ENCODE measurements at regions of chr4 and their contacts with region 1.

Region 1: GRCh38 chr4:108036213-108036612 is 46.5 kb downstream of the HADH start:
- DNase-seq: no peak
- ATAC-seq: peak; percentile 85
- H3K4me3 ChIP-seq: peak overlapping the region; percentile 17; the same call in 1 of the 2 replicates
- H3K27ac ChIP-seq: peak overlapping the region; percentile 70
- H3K4me1 ChIP-seq: peaks cover 12% of the 10 kb centered on the region
- H3K27me3 ChIP-seq: no peaks in the 10 kb centered on the region
- CTCF ChIP-seq: no peak
- EP300 ChIP-seq: no peak
- POLR2A ChIP-seq: peak; percentile 74
- RAD21 ChIP-seq: no peak

Region 2: DNA sequence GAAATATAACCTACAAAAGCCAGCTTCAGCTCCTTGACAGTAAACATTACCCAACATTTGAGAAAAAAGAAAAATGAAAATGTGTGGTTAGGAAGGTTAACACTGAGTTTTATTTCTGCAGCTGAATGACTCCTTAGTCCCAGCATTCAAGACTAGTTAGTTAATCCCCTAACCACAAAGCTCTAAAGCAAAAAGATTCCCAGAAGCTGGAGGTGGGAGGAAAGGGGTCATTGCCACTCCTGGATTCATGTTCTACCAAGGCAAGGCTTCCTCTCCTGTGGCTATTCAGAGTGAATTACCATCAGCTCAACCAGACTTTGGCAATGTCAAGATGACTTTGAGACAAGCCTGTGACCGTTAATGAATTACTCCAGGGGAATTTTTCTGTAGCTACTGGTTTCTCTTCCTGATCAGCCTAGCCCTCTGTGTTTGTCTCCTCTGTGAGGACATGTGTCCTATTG is 17.1 kb after region 1 on chr4:
- CTCF ChIA-PET with region 1: interaction called, 8 read pairs
- POLR2A ChIA-PET with region 1: interaction called, 5 read pairs
- RAD21 ChIA-PET with region 1: interaction called, 14 read pairs
- SMC1A ChIA-PET with region 1: interaction called, 21 read pairs
- in situ Hi-C with region 1: no loop called
- intact Hi-C with region 1: no loop called
- DNase-seq: no peak
- ATAC-seq: peak; percentile 93
- H3K4me3 ChIP-seq: no peak overlapping the region
- H3K27ac ChIP-seq: no peak overlapping the region
- H3K4me1 ChIP-seq: no peaks in the 10 kb centered on the region
- H3K27me3 ChIP-seq: no peaks in the 10 kb centered on the region
- CTCF ChIP-seq: no peak
- EP300 ChIP-seq: no peak
- POLR2A ChIP-seq: no peak
- RAD21 ChIP-seq: no peak

Region 3: DNA sequence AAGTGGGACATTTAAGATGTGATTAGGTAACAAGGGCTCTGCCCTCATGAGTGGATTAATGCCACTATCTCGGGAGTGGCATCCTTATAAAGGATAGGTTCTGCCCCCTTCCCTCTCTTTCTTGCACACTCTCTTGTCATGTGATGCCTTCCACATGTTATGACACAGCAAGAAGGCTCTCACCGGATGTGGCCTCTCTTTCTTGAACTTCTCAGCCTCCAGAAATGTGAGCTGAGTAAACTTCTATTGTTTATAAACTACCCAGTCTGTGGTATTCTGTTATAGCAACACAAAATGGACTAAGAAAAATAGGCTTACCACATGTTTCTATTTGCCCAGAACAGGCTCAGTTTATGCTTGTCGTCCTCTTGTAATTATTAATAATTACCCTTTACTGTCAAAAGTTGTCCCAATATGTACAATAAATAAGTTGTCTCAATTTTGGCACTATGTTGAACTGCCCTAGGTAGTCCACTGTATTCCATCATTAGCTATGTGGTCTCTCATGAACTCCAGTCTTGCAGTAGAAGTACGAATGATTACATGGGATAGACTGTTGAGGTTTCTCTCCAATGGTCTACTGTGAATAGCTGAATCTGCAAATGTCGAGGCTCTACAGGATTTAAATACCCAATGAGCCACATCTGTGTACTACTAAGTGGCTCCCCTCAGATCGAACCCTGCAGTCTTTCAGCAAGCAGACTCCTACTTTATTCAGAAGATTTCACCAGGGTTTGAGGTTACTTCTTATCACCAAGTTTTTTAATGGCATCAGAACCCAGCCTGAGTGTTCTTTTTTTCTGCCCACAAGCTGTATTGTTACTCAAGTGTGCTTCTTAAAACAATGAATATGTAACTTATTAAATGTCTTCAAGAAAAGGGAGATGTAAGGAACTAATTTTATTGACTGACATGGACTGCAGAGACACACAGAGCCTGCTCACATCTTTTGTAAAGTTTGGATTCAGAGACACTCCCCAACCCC is 234.5 kb after region 1 on chr4:
- CTCF ChIA-PET with region 1: no interaction called
- POLR2A ChIA-PET with region 1: no interaction called
- RAD21 ChIA-PET with region 1: no interaction called
- SMC1A ChIA-PET with region 1: no interaction called
- in situ Hi-C with region 1: no loop called
- intact Hi-C with region 1: no loop called
- DNase-seq: no peak
- ATAC-seq: no peak
- H3K4me3 ChIP-seq: no peak overlapping the region
- H3K27ac ChIP-seq: no peak overlapping the region
- H3K4me1 ChIP-seq: no peaks in the 10 kb centered on the region
- H3K27me3 ChIP-seq: no peaks in the 10 kb centered on the region
- CTCF ChIP-seq: no peak
- EP300 ChIP-seq: no peak
- POLR2A ChIP-seq: no peak
- RAD21 ChIP-seq: no peak